PC-9 (cell line): ENCODE measurements at regions of chr19 and their contacts with region 1.

Region 1: GRCh38 chr19:37941782-37942515 is 34.9 kb downstream of the SIPA1L3 start:
- DNase-seq: peak; percentile 48 to 85
- H3K4me3 ChIP-seq: peak overlapping the region; percentile 34; the same call in 1 of the 2 replicates
- H3K27ac ChIP-seq: peak overlapping the region; percentile 67
- H3K4me1 ChIP-seq: peaks cover 43% of the 10 kb centered on the region
- H3K27me3 ChIP-seq: no peaks in the 10 kb centered on the region
- CTCF ChIP-seq: no peak

Region 2: DNA sequence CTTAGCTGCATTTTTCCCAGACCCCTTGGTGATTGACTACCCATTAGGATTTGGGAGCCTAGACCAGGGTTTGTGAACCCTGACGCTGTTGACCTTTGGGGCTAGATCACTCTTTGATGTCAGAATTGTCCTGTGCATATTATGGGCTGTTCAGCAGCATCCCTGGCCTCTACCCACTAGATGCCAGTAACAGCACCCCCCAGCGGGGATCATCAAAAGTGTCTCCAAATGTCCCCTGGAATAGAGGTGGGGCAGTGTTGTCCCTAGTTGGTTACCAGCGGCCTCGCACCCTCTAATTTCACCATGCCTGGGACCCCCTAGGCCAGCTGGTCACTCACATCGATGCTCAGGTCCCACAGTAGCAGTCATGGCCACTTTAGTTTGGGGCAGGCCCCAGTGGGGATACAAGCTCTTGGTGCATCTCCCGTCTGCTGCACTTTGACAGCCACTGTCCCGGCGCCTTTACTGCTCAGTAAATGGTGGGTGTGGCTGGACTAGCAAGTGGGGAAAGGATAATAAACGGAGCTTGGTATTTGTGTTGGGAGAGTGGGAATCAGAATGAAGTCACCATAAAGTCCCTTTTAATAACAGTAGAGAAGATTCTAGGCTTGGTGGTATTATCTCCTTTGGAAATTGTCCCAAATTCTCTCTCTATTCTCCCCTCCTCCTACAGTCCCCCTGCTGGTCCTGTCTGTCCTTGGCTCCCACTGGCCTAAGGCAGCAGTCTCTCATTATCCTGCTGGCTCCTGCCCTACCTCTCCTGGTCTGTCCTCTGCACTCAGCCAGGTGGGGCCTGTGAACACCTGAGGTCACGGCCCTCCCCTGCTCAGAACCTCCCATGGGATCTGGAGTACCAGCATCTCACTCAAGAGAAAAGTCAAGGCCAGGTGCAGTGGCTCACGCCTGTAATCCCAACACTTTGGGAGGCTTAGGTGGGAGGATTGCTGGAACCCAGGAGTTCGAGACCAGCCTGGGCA is 45.7 kb after region 1 on chr19:
- CTCF ChIA-PET with region 1: no interaction called
- POLR2A ChIA-PET with region 1: no interaction called
- intact Hi-C with region 1: no loop called
- DNase-seq: no peak
- H3K4me3 ChIP-seq: no peak overlapping the region
- H3K27ac ChIP-seq: no peak overlapping the region
- H3K4me1 ChIP-seq: peaks cover 41% of the 10 kb centered on the region
- H3K27me3 ChIP-seq: no peaks in the 10 kb centered on the region
- CTCF ChIP-seq: peak; percentile 42

Region 3: DNA sequence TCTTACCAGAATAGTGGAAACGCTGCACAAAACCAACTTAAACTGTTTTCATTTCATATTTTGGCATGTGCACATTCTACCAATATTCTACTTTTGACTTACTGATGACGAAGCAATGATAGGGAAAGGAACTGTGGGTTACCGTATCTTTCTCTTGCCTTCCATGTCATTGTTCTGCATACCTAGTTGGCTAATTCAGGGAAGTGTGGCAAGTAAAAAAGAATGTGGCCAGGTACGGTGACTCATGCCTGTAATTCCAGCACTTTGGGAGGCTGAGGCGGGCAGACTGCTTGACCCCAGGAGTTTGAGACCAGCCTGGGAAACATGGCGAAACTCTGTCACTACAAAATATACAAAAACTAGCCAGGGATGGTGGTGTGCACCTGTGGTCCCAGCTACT is 73.3 kb after region 1 on chr19:
- CTCF ChIA-PET with region 1: no interaction called
- POLR2A ChIA-PET with region 1: no interaction called
- intact Hi-C with region 1: loop called (anchors 5 kb)
- DNase-seq: peak; percentile 69 to 93
- H3K4me3 ChIP-seq: no peak overlapping the region
- H3K27ac ChIP-seq: peak overlapping the region; percentile 78
- H3K4me1 ChIP-seq: peaks cover 18% of the 10 kb centered on the region
- H3K27me3 ChIP-seq: no peaks in the 10 kb centered on the region
- CTCF ChIP-seq: no peak

Region 4: GRCh38 chr19:38095411-38096308 is 153.7 kb after region 1 on chr19:
- CTCF ChIA-PET with region 1: no interaction called
- POLR2A ChIA-PET with region 1: no interaction called
- intact Hi-C with region 1: no loop called
- DNase-seq: peak in 1 of 2 experiments; percentile 61
- H3K4me3 ChIP-seq: no peak overlapping the region
- H3K27ac ChIP-seq: no peak overlapping the region
- H3K4me1 ChIP-seq: no peaks in the 10 kb centered on the region
- H3K27me3 ChIP-seq: no peaks in the 10 kb centered on the region
- CTCF ChIP-seq: peak; percentile 74